Activated CD8-positive, alpha-beta T cell treated with anti-CD3 and anti-CD28 coated beads for 36 hours (primary cell): ENCODE measurements at regions of chr1 and their contacts with region 1.

Region 1: DNA sequence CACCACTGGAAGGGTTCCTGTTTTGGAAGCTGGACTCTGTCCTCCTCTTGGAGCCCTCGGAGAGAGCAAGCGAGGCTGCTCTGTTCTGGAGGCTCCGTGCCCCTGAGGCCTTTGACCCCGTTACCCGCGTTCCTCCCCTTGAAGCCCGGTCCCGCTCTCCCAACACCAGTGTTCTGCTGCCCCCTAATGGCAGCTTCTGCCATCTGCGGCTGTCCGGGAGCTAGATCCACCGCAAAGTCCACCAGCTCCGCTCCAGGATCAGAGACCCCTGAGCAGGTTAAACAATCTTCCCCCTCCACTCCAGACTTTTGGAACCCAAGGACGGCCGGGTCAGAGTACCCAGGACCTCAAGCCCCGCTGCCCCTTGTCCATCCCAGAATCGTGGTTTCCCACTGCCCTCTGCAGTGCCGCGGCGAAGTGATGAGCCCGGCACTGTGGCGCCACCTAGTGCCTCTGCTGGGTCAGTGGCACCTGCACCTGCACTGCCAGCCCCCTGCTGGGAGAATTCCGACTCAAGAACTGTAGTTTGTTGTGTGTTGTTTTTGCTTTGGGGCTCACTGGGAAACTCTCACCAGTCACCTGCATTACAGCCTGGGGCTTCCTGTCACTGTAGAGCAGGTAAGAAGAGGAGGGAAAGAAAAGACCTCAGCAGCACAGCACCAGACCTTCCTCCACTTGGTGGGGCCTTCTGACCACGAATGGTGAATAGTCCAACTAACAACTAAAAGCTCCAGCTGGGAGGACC is 63.5 kb upstream of the NFASC start:
- DNase-seq: peak; percentile 91
- ATAC-seq: peak; percentile 95
- H3K4me3 Mint-ChIP-seq: peak overlapping the region; percentile 76
- H3K27ac Mint-ChIP-seq: peak overlapping the region; percentile 73
- H3K4me1 Mint-ChIP-seq: peaks cover 11% of the 10 kb centered on the region
- H3K27me3 Mint-ChIP-seq: no peaks in the 10 kb centered on the region
- CTCF ChIP-seq: peak; percentile 6

Region 2: GRCh38 chr1:204446370-204447111 is 360.6 kb before region 1 on chr1:
- CTCF ChIA-PET with region 1: interaction called, 16 read pairs
- POLR2A ChIA-PET with region 1: no interaction called
- intact Hi-C with region 1: no loop called
- DNase-seq: peak; percentile 87
- ATAC-seq: peak; percentile 91
- H3K4me3 Mint-ChIP-seq: no peak overlapping the region
- H3K27ac Mint-ChIP-seq: peak overlapping the region; percentile 69
- H3K4me1 Mint-ChIP-seq: peaks cover 16% of the 10 kb centered on the region
- H3K27me3 Mint-ChIP-seq: no peaks in the 10 kb centered on the region
- CTCF ChIP-seq: peak; percentile 66

Region 3: GRCh38 chr1:204544321-204544720 is 262.8 kb before region 1 on chr1:
- CTCF ChIA-PET with region 1: interaction called, 16 read pairs
- POLR2A ChIA-PET with region 1: no interaction called
- intact Hi-C with region 1: no loop called
- DNase-seq: no peak
- ATAC-seq: peak; percentile 94
- H3K4me3 Mint-ChIP-seq: no peak overlapping the region
- H3K27ac Mint-ChIP-seq: peak overlapping the region; percentile 59
- H3K4me1 Mint-ChIP-seq: peaks cover 59% of the 10 kb centered on the region
- H3K27me3 Mint-ChIP-seq: no peaks in the 10 kb centered on the region
- CTCF ChIP-seq: no peak

Region 4: GRCh38 chr1:204607910-204608309 is 199.2 kb before region 1 on chr1:
- CTCF ChIA-PET with region 1: interaction called, 13 read pairs
- POLR2A ChIA-PET with region 1: no interaction called
- intact Hi-C with region 1: no loop called
- DNase-seq: no peak
- ATAC-seq: no peak
- H3K4me3 Mint-ChIP-seq: no peak overlapping the region
- H3K27ac Mint-ChIP-seq: no peak overlapping the region
- H3K4me1 Mint-ChIP-seq: no peaks in the 10 kb centered on the region
- H3K27me3 Mint-ChIP-seq: no peaks in the 10 kb centered on the region
- CTCF ChIP-seq: no peak

Region 5: GRCh38 chr1:204640578-204640977 is 166.5 kb before region 1 on chr1:
- CTCF ChIA-PET with region 1: interaction called, 14 read pairs
- POLR2A ChIA-PET with region 1: no interaction called
- intact Hi-C with region 1: no loop called
- DNase-seq: no peak
- ATAC-seq: no peak
- H3K4me3 Mint-ChIP-seq: no peak overlapping the region
- H3K27ac Mint-ChIP-seq: no peak overlapping the region
- H3K4me1 Mint-ChIP-seq: no peaks in the 10 kb centered on the region
- H3K27me3 Mint-ChIP-seq: peaks cover 3% of the 10 kb centered on the region
- CTCF ChIP-seq: no peak

Region 6: DNA sequence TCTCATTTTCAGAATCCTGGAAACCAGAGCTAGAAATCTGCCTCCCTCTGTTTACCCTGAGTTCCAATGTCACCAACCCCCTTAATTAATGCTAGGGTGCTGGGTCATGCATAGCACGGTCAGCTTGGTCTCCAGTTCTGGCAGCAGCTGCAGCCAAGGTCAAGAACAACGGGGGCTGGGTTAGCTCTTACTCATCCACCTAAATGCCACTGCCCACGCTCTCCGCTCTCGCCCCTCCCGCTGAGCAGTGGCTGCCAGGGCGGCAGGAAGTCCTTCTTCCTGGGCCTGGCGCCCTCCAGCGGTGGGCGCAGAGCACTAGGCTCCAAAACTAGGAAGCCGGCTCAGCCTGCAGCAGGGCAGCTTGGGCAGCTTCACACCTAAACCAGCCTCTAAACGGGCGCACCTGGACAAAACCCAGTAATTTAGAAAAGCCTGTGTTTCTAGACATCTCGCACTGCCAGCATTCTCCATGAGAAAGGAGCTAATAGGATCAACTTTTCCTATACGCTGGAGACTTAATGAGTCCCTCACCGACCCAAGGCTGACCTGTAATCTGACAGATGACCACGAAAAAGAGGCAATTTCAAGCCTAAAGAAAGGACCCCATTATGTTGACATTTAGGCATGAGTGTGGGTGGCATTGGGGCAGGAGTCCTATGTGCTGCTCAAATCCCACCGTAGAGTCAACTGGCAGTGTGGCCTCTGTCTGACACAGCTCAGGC is 43.2 kb before region 1 on chr1:
- CTCF ChIA-PET with region 1: interaction called, 59 read pairs
- POLR2A ChIA-PET with region 1: no interaction called
- intact Hi-C with region 1: no loop called
- DNase-seq: peak; percentile 92
- ATAC-seq: peak; percentile 99
- H3K4me3 Mint-ChIP-seq: no peak overlapping the region
- H3K27ac Mint-ChIP-seq: no peak overlapping the region
- H3K4me1 Mint-ChIP-seq: peaks cover 10% of the 10 kb centered on the region
- H3K27me3 Mint-ChIP-seq: peaks cover 4% of the 10 kb centered on the region
- CTCF ChIP-seq: peak; percentile 87

Region 7: DNA sequence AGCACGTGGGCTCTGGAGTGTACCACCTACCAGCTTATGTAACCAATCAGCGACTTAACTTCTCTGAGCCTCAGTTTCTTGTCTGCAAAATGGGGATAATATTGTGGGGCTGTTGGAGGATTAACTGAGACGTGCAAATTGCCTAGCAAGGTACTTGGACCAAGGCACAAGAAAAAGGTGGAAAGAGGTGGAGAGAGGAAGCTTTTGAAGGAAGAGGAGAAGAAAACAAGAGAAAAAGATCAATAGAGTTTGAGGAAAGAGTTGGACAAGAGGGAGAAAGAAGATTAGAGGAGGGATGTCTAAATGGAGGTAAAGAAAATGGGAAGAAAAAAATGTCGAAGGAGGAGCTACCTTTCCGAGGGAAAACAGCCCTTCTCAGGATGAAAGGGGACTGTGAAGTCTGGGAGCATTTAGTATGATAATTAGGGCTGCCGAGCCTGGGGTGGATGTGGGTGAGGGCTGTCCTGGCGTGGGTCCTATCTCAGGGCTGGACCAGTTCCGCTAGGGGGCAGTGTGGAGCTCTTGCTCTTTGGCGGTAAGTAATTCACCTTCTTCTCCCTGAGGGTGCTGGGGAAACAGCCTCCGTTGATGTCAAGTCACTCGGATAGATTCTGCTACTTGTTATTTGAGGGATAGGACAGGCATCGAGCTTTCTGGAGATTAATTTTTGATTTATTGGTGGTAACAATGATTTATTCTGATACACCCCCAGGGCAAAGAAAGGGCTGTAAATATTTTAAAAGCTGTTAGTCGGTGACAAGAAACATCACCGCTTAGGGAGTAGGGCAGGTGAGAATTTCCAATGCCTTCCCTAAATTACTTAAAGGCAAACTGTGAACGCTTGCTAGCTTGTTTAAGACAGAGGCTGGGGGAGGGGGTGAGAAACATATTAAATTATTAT is 15.4 kb before region 1 on chr1:
- CTCF ChIA-PET with region 1: interaction called, 307 read pairs
- POLR2A ChIA-PET with region 1: no interaction called
- intact Hi-C with region 1: no loop called
- DNase-seq: peak; percentile 93
- ATAC-seq: peak; percentile 94
- H3K4me3 Mint-ChIP-seq: no peak overlapping the region
- H3K27ac Mint-ChIP-seq: no peak overlapping the region
- H3K4me1 Mint-ChIP-seq: peaks cover 2% of the 10 kb centered on the region
- H3K27me3 Mint-ChIP-seq: peaks cover 28% of the 10 kb centered on the region
- CTCF ChIP-seq: peak; percentile 91

Region 8: DNA sequence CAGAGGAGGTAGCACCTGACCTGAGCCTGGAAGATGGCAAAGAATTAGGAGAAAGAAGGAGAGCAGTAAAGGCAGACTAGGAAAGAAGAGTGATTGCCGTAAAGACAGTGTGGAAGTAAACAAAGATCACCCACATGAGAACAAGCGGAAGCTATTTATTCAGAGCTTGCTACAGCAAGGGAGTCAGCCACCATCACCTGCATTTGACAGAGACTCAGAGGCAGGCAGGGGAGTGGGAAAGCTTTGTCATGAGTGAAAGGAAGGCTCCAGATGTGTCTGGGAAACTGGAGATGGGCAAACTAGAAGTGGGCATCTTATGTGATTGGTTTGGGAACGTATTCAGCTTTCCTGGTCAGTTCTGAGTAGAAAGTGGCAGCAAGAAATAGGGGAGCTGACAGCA is 128.0 kb after region 1 on chr1:
- CTCF ChIA-PET with region 1: no interaction called
- POLR2A ChIA-PET with region 1: no interaction called
- intact Hi-C with region 1: no loop called
- DNase-seq: no peak
- ATAC-seq: no peak
- H3K4me3 Mint-ChIP-seq: no peak overlapping the region
- H3K27ac Mint-ChIP-seq: no peak overlapping the region
- H3K4me1 Mint-ChIP-seq: no peaks in the 10 kb centered on the region
- H3K27me3 Mint-ChIP-seq: peaks cover 3% of the 10 kb centered on the region
- CTCF ChIP-seq: no peak